ENCODE measurements at regions of chr22 and their contacts with region 1.

Region 1: DNA sequence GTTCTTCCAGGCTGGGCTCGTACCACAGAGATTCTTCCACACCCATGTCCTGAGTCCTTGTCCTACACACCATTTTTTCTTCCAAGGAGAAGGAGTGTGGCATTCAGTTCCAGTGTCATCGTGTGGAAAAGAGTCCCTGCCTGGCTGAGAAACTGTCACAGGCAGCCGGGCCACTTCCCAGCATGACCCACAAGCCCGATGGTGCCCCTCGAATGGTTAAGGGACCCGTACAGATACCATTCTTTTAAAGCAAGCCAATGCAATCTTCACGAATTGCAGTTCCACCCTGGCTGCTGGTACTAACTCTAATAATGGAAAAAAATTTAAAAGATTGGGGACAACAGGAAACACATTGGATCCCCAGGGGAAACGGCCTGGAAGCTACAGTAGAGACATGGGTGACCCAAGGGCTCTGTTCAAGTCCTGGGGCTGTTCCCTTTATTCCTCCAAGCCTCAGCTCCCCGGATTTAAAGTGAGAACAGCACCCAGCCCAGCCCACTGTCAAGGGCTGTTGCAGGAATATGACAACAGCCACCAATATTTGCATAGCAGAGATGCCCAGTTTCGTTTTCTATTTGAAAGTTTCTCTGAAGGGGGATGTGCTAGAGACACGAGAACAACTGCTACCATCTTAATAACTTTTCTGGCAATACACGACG is 80.9 kb upstream of the WNT7B start:
- DNase-seq: peak; percentile 29 to 78
- H3K4me3 ChIP-seq: peak overlapping the region; percentile 73 to 85
- H3K27ac ChIP-seq: peak overlapping the region; percentile 97 to 98
- H3K4me1 ChIP-seq: peaks cover 16 to 55% of the 10 kb centered on the region in 2 donors
- H3K27me3 ChIP-seq: no peaks in the 10 kb centered on the region
- CTCF ChIP-seq: no peak

Region 2: DNA sequence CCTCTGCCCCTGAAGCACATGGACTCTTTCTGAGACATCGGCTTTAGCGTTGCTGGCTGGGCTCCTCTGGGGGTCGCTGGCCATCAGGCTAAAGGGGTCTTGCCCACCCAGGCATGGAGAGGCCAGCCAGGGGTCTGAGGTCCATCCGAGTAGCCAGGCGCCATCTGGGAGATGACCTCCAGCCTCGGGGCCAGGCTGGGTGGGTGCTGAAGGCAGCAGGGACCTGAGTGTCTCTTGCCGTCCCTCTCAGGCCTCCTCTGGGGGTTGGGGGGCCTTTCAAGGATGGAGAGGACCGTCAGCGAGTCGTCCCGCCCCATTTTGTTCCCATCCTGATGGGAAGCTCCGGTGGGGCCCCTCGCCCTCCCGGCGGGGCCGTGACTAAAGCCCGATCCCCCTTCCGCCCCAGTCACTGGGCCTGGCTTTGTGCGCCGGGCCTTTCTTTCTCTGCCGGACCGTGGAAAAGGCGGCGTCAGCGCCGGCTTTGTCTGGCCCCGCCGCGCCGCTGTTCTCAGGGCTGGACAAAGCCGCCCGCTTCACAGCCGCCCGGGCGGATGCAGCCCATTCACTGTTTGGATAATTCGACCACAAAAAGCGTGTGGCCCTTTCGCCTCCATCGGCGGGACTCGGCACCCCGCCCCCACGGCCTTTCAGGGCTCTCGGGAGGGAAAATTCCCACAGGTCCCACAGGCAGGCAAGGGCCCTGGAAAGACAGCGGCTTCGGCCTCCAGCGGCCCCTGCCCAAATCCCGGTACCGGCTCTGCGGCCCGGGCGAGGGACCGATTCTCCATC is 168.4 kb before region 1 on chr22:
- intact Hi-C with region 1: no loop called
- DNase-seq: no peak
- H3K4me3 ChIP-seq: peak overlapping the region in 1 of 2 donors; percentile 25
- H3K27ac ChIP-seq: no peak overlapping the region
- H3K4me1 ChIP-seq: no peaks in the 10 kb centered on the region
- H3K27me3 ChIP-seq: peaks cover 9% of the 10 kb centered on the region
- CTCF ChIP-seq: no peak

Region 3: DNA sequence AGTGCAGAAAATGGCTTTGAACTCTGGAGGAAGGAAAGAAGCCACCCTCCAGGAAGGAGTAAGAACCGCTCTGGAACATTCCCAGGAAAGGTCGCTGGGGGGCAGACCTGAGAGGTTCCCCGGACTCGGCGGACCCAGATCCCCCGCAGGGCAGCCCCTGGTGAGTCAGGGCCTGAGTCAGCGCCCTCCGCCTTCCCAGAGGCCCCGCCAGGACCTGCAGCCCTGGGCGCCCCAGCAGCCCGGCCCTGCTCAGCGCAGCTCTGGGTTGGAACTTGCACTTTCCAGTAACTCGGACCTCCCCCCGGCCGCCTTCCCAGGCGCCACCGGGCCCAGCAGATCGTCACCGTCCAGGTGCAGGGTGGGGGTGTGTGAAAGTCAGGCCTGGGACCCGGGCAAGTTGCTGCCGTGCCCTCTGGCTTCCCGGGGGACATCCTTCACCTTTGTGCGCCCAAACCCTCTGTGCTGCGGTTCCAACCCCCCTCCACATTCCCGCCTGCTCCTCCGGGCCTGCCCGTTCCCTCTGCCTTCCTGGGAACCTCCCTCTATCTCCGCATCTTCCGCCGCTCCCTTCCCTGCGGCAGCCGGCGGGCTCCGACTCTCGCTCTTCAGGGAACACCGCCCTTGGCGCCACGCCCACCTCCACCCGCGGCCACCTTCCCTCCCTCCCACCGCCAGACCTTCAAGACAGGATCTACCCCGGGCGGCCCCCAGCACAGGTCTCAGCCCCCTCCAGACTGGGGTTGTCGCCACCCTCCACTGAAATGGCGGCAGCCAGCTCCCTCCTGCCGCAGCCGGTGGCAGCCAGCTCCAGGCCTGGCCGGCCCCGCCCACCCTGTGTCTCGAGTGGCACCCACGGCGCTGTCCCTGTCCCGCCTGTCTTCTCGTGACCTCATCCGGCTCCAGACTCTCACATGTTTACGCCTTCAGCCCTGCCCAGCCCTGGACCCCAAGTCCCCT is 44.2 kb before region 1 on chr22:
- intact Hi-C with region 1: loop called (anchors 5 kb)
- DNase-seq: peak; percentile 82 to 97
- H3K4me3 ChIP-seq: peak overlapping the region; percentile 61 to 75
- H3K27ac ChIP-seq: peak overlapping the region; percentile 90 to 99
- H3K4me1 ChIP-seq: peaks cover 0 to 8% of the 10 kb centered on the region in 2 donors
- H3K27me3 ChIP-seq: no peaks in the 10 kb centered on the region
- CTCF ChIP-seq: peak; percentile 62 to 77 (median 65)

Region 4: GRCh38 chr22:46035742-46036557 is 21.9 kb before region 1 on chr22:
- intact Hi-C with region 1: no loop called
- DNase-seq: peak; percentile 98 to 100
- H3K4me3 ChIP-seq: peak overlapping the region; percentile 74 to 88
- H3K27ac ChIP-seq: peak overlapping the region; percentile 94 to 98
- H3K4me1 ChIP-seq: peaks cover 6 to 11% of the 10 kb centered on the region in 2 donors
- H3K27me3 ChIP-seq: no peaks in the 10 kb centered on the region
- CTCF ChIP-seq: no peak

Region 5: DNA sequence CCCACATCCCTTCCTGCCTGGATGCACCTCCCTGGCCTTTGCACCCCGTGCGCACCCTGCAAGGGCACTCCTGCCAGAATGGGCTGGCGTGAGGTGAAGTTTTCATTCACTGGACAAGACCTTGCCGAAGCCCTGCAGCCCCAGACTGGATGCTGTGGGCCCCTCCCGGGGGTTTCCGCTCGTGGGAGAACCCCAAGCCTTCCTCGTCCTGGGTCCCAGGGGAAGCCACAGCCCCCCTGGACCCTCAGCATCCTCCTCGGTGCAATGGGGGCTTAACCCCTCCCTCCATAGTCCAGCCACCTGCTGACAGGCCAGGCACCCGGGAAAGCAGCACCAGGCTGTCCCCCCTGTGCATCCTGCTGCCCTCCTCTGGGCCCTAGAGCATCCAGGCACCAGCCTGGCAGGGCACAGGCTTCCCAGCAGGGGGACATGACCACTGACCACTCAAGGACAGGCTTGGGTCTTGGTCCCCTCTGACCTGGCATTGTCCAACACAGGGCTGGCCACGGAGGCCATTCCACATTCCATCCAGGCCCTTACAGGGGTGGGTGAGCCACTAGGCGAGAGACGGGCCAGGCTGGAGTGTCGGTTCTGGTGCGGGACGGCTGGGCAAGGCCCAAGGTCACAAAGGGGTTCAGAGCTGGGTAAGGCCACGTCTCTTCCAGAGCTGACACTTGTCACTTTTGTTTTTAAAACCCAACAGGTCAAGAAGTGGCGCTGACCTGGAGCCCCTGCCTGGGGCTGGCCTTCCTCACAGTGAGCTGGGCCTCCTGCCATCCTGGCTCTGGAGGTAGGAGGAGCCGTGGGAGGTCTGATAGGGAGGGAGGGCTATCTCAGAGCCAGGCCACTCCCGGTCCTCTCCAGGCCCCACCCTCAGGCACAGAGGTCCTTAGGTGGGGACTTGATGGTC is 50.9 kb after region 1 on chr22:
- intact Hi-C with region 1: loop called (anchors 10 kb)
- DNase-seq: no peak
- H3K4me3 ChIP-seq: no peak overlapping the region
- H3K27ac ChIP-seq: peak overlapping the region; percentile 94 to 100
- H3K4me1 ChIP-seq: peaks cover 60 to 92% of the 10 kb centered on the region in 2 donors
- H3K27me3 ChIP-seq: no peaks in the 10 kb centered on the region
- CTCF ChIP-seq: no peak

Measured in ascending aorta (tissue), 2 donors.